ENCODE measurements at regions of chr1 and their contacts with region 1.

Region 1: GRCh38 chr1:84573967-84574842 is at the start of gene CTBS:
- DNase-seq: peak; percentile 91
- ATAC-seq: peak; percentile 98 to 99
- total RNA-seq, gene CTBS: 8.0 to 11.4 TPM

Region 2: GRCh38 chr1:84506002-84506728 is 68.0 kb before region 1 on chr1 and contains the starts of genes GNG5 and SPATA1:
- intact Hi-C with region 1: loop called in 1 of 2 experiments (anchors 5 kb)
- DNase-seq: peak; percentile 99
- ATAC-seq: peak; percentile 97
- total RNA-seq, gene GNG5: 141 to 155 TPM
- total RNA-seq, gene SPATA1: 0.77 to 2.2 TPM